Heart left ventricle (tissue), 16 donors: ENCODE measurements at regions of chr4 and their contacts with region 1.

Region 1: DNA sequence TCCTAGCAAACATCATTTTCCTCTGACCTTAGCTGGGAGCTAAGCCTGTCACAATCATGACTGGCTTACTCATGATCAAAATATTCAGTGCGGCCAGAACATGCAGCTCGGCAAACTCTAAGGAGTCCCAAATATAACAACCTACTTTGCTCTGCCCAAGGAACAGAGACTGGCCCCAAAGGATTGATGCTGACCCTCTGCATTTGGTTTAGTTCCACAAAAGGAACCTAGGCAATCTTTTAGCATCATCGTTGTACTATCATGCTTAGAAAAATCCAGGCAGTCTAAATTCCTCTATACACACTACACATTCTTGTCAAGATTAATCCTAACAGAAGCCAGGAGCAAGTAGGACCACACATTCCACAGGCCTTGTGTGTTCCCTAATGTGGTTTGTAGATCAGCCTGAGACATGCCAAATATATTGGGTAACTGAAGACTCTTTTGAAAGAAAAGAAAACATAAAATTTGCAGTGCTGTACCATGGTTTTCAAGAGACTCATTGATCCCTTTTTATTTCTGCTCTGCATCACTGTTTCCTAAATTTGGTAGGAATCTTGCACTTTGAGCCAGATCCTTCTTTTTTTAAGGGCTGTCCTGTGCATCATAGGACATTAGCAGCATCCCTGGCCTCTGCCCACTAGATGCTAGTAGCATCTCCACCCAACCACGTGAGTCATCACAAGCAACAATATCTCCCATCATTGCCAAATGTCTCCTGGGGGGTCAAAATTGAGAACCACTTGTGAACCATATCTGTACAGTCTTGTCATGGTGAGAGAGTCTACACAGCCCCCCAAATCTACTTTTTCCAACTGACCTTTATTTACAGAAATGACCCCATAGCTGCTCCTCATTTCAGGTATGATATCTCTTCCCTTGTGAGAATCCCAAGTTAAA is 17.6 kb upstream of the CC2D2A start:
- DNase-seq: no peak
- ATAC-seq: peak; percentile 60 to 89 (median 79)
- H3K4me3 ChIP-seq: no peak overlapping the region
- H3K27ac ChIP-seq: peak overlapping the region in 10 of 12 donors; percentile 6 to 62 (median 34)
- H3K4me1 ChIP-seq: peaks cover 3 to 37% (median 20%) of the 10 kb centered on the region in 12 donors
- H3K27me3 ChIP-seq: no peaks in the 10 kb centered on the region
- CTCF ChIP-seq: no peak
- POLR2A ChIP-seq: no peak

Region 2: DNA sequence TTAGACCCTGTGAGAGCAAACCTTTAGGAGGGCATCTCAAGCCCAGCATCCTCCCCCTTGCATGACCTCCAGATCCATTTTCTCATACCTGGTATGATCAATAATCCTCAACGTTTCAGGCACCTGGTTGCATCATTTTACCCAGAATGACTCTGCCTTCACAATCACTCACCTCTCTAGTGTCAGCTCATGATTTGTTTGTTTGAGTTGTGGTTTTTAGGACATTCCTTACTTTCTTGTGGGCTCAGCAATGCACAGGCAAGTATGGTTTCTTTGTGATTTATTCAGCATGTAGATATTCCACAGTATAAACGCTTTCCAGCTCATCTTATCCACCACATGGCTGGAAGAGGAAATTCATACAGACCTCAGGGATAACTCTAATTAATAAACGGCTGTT is 543.5 kb before region 1 on chr4:
- intact Hi-C with region 1: no loop called
- DNase-seq: no peak
- ATAC-seq: no peak
- H3K4me3 ChIP-seq: no peak overlapping the region
- H3K27ac ChIP-seq: no peak overlapping the region
- H3K4me1 ChIP-seq: no peaks in the 10 kb centered on the region
- H3K27me3 ChIP-seq: no peaks in the 10 kb centered on the region
- CTCF ChIP-seq: no peak
- POLR2A ChIP-seq: no peak

Region 3: GRCh38 chr4:15410750-15411149 is 41.4 kb before region 1 on chr4:
- intact Hi-C with region 1: loop called in 2 of 10 experiments (anchors 5 to 10 kb)
- DNase-seq: no peak
- ATAC-seq: no peak
- H3K4me3 ChIP-seq: no peak overlapping the region
- H3K27ac ChIP-seq: peak overlapping the region in 3 of 12 donors; percentile 8 to 24 (median 21)
- H3K4me1 ChIP-seq: peaks cover 0 to 44% (median 14%) of the 10 kb centered on the region in 12 donors
- H3K27me3 ChIP-seq: no peaks in the 10 kb centered on the region
- CTCF ChIP-seq: no peak
- POLR2A ChIP-seq: no peak